Heart left ventricle (tissue), 16 donors: ENCODE measurements at regions of chr7 and their contacts with region 1.

Region 1: DNA sequence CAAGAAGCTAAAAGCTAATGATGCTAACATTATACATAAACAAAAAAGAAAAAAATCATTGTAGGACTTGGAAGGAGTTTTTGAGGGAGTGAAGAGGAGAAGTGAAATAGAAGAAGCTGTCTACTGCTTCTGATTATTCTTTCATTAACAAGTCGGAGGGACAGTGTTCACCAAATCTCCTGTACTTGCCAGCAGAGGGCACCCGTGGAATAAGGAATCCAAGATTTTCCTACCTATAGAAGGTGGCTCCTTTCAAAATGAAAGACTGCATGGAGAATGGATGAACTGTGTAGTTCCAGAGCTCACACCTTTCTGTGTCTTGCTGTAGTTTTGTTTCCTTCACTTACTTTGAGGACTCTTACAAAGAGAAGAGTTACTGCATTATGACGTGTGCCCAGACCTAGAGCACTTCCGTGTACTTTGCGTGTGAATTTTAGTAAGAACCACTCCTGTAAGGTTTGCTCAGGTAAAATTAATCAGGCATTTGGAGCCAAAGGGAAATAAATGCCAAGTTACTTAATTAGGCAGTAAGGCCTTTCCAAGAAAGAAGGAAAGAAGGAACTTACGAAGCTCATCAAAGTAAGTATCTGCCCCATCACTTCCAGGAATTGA is 145.1 kb downstream of the SEMA3D start:
- DNase-seq: peak in 4 of 5 donors; percentile 36 to 44 (median 42)
- ATAC-seq: peak in 3 of 4 donors; percentile 55 to 63 (median 56)
- H3K4me3 ChIP-seq: no peak overlapping the region
- H3K27ac ChIP-seq: no peak overlapping the region
- H3K4me1 ChIP-seq: no peaks in the 10 kb centered on the region
- H3K27me3 ChIP-seq: peaks cover 0 to 4% (median 0%) of the 10 kb centered on the region in 9 donors
- CTCF ChIP-seq: peak; percentile 38 to 82 (median 66)
- POLR2A ChIP-seq: no peak

Region 2: DNA sequence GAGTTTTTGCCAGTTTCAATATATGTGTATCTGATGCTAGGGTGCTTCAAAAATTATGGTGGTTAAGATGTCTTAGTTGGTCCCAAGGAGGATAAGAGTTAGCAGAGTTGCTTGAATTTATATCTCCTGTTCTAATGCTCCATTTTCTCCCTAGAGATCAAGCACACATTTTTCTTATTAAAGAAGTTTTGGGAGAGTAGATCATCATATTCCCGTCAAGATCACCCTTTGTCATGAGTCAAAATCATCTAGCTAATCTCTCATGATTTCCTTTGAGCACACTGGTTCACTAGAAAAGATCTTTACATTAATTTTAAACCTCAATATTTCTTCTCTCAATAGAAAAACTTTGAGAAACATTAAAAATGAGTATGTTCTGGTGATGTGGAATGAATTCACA is 417.2 kb before region 1 on chr7:
- intact Hi-C with region 1: no loop called
- DNase-seq: no peak
- ATAC-seq: no peak
- H3K4me3 ChIP-seq: no peak overlapping the region
- H3K27ac ChIP-seq: no peak overlapping the region
- H3K4me1 ChIP-seq: no peaks in the 10 kb centered on the region
- H3K27me3 ChIP-seq: no peaks in the 10 kb centered on the region
- CTCF ChIP-seq: no peak
- POLR2A ChIP-seq: no peak

Region 3: DNA sequence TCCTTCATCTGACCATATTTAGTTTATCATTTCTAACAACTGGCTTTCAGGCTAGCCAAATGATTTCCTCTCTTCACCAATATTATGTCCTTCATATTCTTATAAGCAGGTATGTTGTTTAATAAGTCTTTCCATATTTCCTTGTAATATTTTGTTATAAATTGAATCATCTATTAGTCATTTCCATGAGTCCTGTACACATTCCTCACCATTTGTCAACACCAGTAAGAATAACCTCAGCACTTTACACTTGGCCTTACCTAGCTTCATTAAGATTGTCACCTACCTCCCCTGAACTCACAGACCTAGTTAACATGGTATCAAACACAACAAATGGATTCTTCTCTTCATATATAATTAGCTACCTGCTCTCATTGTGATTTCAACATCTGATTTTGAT is 137.2 kb before region 1 on chr7:
- intact Hi-C with region 1: no loop called
- DNase-seq: no peak
- ATAC-seq: no peak
- H3K4me3 ChIP-seq: no peak overlapping the region
- H3K27ac ChIP-seq: no peak overlapping the region
- H3K4me1 ChIP-seq: no peaks in the 10 kb centered on the region
- H3K27me3 ChIP-seq: no peaks in the 10 kb centered on the region
- CTCF ChIP-seq: no peak
- POLR2A ChIP-seq: no peak

Region 4: GRCh38 chr7:85186521-85187241 is 145.0 kb after region 1 on chr7 and contains the start of gene SEMA3D:
- intact Hi-C with region 1: loop called (anchors 2 to 10 kb)
- DNase-seq: peak; percentile 46 to 79 (median 60)
- ATAC-seq: peak; percentile 57 to 98 (median 96)
- H3K4me3 ChIP-seq: peak within 1 kb of the TSS; percentile 25 to 73 (median 56)
- H3K27ac ChIP-seq: peak within 1 kb of the TSS in 8 of 12 donors; percentile 20 to 72 (median 44)
- H3K4me1 ChIP-seq: peaks cover 0 to 26% (median 3%) of the 10 kb centered on the region in 12 donors
- H3K27me3 ChIP-seq: peaks cover 0 to 42% (median 8%) of the 10 kb centered on the region in 9 donors
- CTCF ChIP-seq: peak; percentile 48 to 84 (median 62)
- POLR2A ChIP-seq: no peak
- total RNA-seq, gene SEMA3D: 0.60 to 8.6 (median 1.00) TPM

Region 5: DNA sequence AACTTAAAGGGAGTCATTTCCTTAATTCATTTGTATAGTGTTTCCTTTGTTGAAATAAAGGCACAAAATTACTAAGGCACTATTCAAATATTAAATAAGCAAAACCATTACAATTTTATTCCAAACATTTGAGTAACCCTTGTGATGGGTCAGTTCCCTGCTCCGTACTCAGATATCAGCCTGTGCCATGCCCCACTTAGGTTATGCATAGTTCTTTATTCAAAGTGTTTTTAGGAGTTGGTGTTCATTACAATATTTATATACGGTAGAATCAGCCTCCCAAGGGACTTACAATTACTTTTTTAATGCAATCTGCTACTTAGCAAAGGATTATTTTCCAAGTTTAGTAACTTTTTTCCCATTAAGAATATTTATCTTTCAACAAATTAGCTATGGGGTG is 264.4 kb after region 1 on chr7:
- intact Hi-C with region 1: no loop called
- DNase-seq: no peak
- ATAC-seq: no peak
- H3K4me3 ChIP-seq: no peak overlapping the region
- H3K27ac ChIP-seq: no peak overlapping the region
- H3K4me1 ChIP-seq: no peaks in the 10 kb centered on the region
- H3K27me3 ChIP-seq: no peaks in the 10 kb centered on the region
- CTCF ChIP-seq: no peak
- POLR2A ChIP-seq: no peak

Region 6: DNA sequence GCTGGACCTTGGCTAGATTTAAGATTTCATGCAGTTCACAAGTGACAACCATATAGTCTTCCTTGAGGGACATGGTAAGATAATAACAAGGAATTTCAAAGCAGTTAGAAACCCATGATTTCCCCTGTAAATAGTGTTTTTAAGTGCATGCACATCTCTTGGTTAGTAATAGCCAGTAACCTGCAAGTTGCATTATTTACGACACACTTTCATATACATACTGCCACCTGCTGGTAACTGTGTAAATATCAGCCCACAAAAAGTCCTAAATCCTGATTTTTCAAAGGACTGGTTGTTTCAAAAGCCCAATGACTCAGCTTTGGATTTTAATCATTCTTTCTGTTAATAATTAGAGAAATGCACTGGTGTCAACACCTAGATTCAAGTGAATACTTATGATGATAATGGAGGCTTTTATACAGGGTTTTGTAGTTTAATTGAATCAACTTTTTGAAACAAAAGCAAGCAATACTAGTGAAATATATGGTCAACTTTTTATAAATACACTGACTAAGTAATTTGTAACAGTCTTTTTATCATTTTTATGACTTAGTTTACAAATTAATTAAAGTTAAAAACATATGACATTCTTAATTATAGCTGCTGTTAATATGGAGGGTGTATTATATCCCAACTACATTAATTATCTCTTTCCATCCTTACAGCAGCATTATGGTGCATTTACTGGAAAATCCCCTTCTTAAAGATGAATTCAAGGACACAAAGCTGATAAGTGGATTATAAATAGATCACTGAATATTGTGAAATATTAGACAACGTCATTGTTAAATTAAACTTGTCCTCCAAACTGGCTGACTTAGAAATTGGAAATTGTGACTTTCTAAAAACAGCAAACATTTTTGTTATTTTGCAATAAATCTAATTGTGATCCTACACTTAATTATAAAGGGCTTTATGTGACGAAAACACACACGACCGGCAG is 512.8 kb after region 1 on chr7:
- intact Hi-C with region 1: loop called (anchors 2 to 10 kb)
- DNase-seq: no peak
- ATAC-seq: peak in 1 of 4 donors; percentile 44
- H3K4me3 ChIP-seq: no peak overlapping the region
- H3K27ac ChIP-seq: no peak overlapping the region
- H3K4me1 ChIP-seq: peaks cover 0 to 3% (median 0%) of the 10 kb centered on the region in 12 donors
- H3K27me3 ChIP-seq: no peaks in the 10 kb centered on the region
- CTCF ChIP-seq: peak; percentile 46 to 75 (median 65)
- POLR2A ChIP-seq: no peak

Region 7: GRCh38 chr7:85840554-85840953 is 798.8 kb after region 1 on chr7:
- intact Hi-C with region 1: loop called in 2 of 10 experiments (anchors 10 kb)
- DNase-seq: no peak
- ATAC-seq: no peak
- H3K4me3 ChIP-seq: no peak overlapping the region
- H3K27ac ChIP-seq: no peak overlapping the region
- H3K4me1 ChIP-seq: no peaks in the 10 kb centered on the region
- H3K27me3 ChIP-seq: peaks cover 0 to 5% (median 0%) of the 10 kb centered on the region in 9 donors
- CTCF ChIP-seq: no peak
- POLR2A ChIP-seq: no peak

Region 8: GRCh38 chr7:86904949-86905834 is 1863.5 kb after region 1 on chr7:
- intact Hi-C with region 1: loop called in 1 of 10 experiments (anchors 10 kb)
- DNase-seq: no peak
- ATAC-seq: no peak
- H3K4me3 ChIP-seq: no peak overlapping the region
- H3K27ac ChIP-seq: no peak overlapping the region
- H3K4me1 ChIP-seq: no peaks in the 10 kb centered on the region
- H3K27me3 ChIP-seq: no peaks in the 10 kb centered on the region
- CTCF ChIP-seq: peak in 11 of 12 donors; percentile 17 to 62 (median 43)
- POLR2A ChIP-seq: no peak